ENCODE measurements at regions of chr11 and their contacts with region 1.

Region 1: DNA sequence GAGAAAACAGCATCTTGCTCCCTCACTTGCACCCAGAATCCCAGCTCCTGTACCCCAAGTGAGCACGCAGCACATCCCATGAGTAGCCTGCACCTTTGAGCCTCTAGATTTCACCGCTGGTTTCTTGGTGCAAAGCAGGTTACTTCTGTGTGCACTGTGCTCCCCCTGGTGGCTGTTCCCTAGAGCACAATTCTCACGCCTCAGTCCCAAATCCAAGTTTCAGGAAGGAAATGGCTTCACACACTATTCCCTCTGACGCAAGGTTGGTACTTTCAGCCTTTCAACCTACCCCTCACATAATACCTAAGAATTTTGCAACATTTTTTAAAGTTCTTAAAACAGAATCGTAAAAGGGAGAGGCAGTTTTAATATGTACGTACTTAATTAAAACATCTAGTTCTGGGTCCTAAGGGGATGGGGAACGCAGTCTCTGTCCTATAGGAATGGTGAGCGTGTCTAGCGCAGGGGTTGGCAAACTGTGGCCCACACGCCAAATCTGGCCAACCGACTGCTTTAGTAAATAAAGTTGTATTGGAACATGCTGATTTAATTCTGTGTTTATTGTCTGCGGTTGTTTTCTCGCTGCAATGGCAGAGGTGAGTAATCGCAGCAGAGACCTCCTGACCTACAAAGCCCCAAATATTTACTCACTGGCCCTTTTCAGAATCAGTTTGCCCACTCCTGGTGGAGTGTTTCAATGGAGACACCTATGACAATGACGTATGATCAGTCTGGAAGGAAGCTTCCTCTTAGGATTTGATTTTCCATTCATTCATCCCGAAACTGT is 27.5 kb downstream of the DHCR7 start:
- DNase-seq: no peak
- CTCF ChIP-seq: peak; percentile 74

Region 2: GRCh38 chr11:70824605-70825245 is 595.9 kb before region 1 on chr11:
- in situ Hi-C with region 1: loop called (anchors 25 kb)
- DNase-seq: peak; percentile 44
- CTCF ChIP-seq: no peak

Region 3: GRCh38 chr11:71558996-71559395 is 138.3 kb after region 1 on chr11:
- in situ Hi-C with region 1: no loop called
- DNase-seq: no peak
- CTCF ChIP-seq: no peak